ENCODE measurements at regions of chr18 and their contacts with region 1.

Region 1: DNA sequence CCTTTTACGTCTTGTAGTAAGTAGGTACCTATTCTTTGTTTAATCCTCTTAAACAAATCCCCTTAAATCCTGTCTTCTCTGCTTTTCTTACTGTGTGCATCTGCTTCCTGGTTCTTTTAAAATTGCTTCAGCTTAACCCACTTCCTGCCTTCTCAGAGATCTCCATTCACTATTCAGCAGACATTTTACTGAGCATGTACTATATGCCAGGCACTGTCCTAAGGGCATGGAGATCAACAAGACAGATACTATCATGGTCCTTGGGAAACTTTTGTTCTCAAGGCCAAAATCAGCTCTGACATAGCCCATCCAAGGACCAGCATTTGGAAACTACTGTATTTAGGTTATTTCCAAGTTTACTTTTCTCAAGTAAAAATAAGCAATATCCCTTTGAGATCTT is 227.5 kb downstream of the TPGS2 start:
- DNase-seq: no peak
- ATAC-seq: no peak
- H3K4me3 ChIP-seq: no peak overlapping the region
- H3K27ac ChIP-seq: no peak overlapping the region
- H3K4me1 ChIP-seq: peaks cover 0 to 14% (median 0%) of the 10 kb centered on the region in 12 donors
- H3K27me3 ChIP-seq: no peaks in the 10 kb centered on the region
- CTCF ChIP-seq: no peak
- POLR2A ChIP-seq: no peak

Region 2: GRCh38 chr18:36650906-36651305 is 49.6 kb after region 1 on chr18:
- intact Hi-C with region 1: loop called in 1 of 10 experiments (anchors 5 kb)
- DNase-seq: no peak
- ATAC-seq: no peak
- H3K4me3 ChIP-seq: no peak overlapping the region
- H3K27ac ChIP-seq: no peak overlapping the region
- H3K4me1 ChIP-seq: peaks cover 0 to 15% (median 0%) of the 10 kb centered on the region in 12 donors
- H3K27me3 ChIP-seq: no peaks in the 10 kb centered on the region
- CTCF ChIP-seq: no peak
- POLR2A ChIP-seq: no peak

Region 3: GRCh38 chr18:36661999-36662398 is 60.7 kb after region 1 on chr18:
- intact Hi-C with region 1: no loop called
- DNase-seq: peak in 1 of 5 donors; percentile 33
- ATAC-seq: peak in 1 of 4 donors; percentile 26
- H3K4me3 ChIP-seq: no peak overlapping the region
- H3K27ac ChIP-seq: no peak overlapping the region
- H3K4me1 ChIP-seq: peaks cover 0 to 20% (median 2%) of the 10 kb centered on the region in 12 donors
- H3K27me3 ChIP-seq: no peaks in the 10 kb centered on the region
- CTCF ChIP-seq: peak in 5 of 12 donors; percentile 10 to 28 (median 23)
- POLR2A ChIP-seq: no peak